ENCODE measurements at regions of chr2 and their contacts with region 1.

Region 1: GRCh38 chr2:99489761-99490622 is at the start of gene REV1:
- DNase-seq: peak; percentile 97
- CTCF ChIP-seq: peak; percentile 75

Region 2: DNA sequence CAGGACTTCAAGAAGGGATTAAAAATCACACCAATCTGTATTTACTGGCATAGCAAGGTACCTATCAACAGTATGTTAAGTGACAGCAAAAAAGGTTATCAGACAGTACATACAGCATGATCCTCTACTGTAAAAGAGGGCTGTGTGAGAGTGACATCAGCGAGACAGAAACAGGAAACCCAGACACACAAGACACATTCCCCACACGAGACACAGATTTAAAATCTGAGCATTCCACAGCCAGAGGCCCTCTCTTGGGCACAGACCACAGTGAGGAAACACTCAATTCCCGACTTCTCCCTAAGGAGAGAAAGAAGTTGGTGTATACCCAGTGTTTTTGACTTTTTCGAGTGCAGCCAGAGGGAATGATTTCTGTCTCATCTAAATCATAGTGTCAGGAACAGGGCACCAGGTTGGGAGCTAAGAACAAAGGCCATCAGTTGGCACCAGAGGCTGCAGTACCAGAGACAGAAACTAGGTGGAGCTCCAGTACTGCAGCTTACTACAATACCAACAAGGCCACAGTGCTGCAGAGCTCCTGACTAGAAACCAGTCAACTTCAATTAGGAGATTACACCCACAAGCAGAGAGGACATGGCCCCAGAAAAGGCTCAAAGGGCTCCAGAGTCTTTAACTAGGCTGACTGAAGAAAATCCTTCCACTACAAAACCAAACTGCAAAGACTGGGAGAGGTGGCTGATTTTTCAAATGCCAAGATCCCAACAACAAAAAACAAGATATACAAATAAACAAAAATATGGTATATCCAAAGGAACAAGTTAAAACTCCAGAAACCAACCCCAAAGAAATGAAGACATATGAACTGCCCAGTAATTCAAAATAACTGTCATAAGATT is 840.6 kb before region 1 on chr2:
- in situ Hi-C with region 1: loop called (anchors 25 kb)
- DNase-seq: peak; percentile 61
- CTCF ChIP-seq: peak; percentile 94

Region 3: DNA sequence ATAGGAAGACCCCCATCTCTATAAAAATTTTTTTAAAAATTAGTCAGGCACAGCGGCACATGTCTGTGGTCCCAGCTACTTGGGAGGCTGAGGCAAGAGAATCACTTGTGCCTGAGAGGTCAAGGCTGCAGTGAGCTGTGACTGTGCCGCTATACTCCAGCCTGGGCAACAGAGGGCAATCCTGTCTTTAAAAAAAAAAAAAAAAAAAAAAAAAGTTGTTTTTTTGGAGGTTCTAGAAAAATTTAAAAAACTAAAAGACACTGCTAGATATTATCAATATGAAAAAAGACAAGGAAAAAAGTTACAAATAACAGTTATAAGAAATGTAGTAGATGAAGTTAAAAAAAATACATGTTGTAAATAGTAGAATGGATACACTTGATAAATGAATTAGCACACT is 404.6 kb before region 1 on chr2:
- in situ Hi-C with region 1: loop called (anchors 25 kb)
- DNase-seq: no peak
- CTCF ChIP-seq: peak; percentile 27

Region 4: GRCh38 chr2:99180755-99181623 is 309.0 kb before region 1 on chr2 and contains the starts of genes MITD1 and MRPL30:
- in situ Hi-C with region 1: loop called (anchors 25 kb)
- DNase-seq: peak; percentile 87
- CTCF ChIP-seq: no peak

Region 5: DNA sequence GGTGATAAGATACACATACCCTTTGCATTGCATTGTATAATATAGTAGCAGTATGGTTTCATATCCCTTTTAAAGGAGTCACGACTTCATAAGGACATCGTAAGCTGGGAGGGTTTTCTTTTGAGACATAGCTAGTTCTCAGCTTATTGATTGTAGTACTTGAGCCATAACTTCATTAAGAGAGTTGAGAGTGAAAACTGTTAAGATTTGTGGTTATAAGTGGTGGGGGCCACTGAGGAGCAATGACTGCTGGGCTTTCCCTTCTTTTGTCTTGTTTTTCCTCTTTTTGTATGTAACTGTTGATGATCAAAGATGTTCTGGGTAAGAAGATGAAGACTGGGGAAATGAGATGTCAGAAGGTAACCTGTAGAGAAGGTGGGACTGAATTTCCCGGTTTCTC is 141.8 kb before region 1 on chr2:
- in situ Hi-C with region 1: loop called (anchors 10 kb)
- DNase-seq: peak; percentile 34
- CTCF ChIP-seq: no peak

Region 6: DNA sequence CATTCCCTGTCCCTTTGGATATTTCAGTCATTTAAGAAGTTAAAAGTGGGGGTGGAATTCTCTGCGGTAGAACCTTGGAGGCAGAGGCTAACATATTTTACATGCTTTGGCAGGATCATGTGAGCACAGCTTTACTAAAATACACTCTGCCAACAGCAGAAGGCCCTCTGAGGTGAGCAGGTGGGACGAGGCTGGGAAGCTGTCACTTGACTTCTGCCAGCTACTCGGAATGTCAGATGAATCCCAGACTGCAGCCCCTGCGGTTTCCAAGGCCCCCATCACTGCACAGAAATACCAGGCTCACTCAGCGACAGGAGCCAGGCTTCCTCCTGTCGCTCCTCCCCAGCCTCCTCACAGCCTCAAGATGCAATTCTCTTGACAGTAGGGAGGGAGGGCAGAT is 220.7 kb after region 1 on chr2:
- in situ Hi-C with region 1: no loop called
- DNase-seq: no peak
- CTCF ChIP-seq: no peak

Measured in GM13976 (cell line).